B cell (primary cell): ENCODE measurements at regions of chr7 and their contacts with region 1.

Region 1: GRCh38 chr7:142811154-142811737 is 40.5 kb downstream of the PRSS2 start:
- DNase-seq: peak; percentile 84
- ATAC-seq: no peak
- H3K4me3 ChIP-seq: peak overlapping the region in 1 of 5 experiments; percentile 8
- H3K4me3 Mint-ChIP-seq: peak overlapping the region; percentile 60
- H3K27ac ChIP-seq: peak overlapping the region; percentile 1 to 99
- H3K27ac Mint-ChIP-seq: peak overlapping the region; percentile 94
- H3K4me1 ChIP-seq: peaks cover 82 to 83% of the 10 kb centered on the region in 2 donors
- H3K4me1 Mint-ChIP-seq: peaks cover 82% of the 10 kb centered on the region
- H3K27me3 ChIP-seq: no peaks in the 10 kb centered on the region
- H3K27me3 Mint-ChIP-seq: no peaks in the 10 kb centered on the region
- CTCF ChIP-seq: peak; percentile 81

Region 2: GRCh38 chr7:142568435-142569097 is 242.7 kb before region 1 on chr7:
- CTCF ChIA-PET with region 1: no interaction called
- POLR2A ChIA-PET with region 1: no interaction called
- intact Hi-C with region 1: no loop called
- DNase-seq: no peak
- ATAC-seq: no peak
- H3K4me3 ChIP-seq: no peak overlapping the region
- H3K4me3 Mint-ChIP-seq: no peak overlapping the region
- H3K27ac ChIP-seq: no peak overlapping the region
- H3K27ac Mint-ChIP-seq: no peak overlapping the region
- H3K4me1 ChIP-seq: peaks cover 0 to 4% of the 10 kb centered on the region in 2 donors
- H3K4me1 Mint-ChIP-seq: no peaks in the 10 kb centered on the region
- H3K27me3 ChIP-seq: peaks cover 0 to 10% (median 3%) of the 10 kb centered on the region in 4 experiments
- H3K27me3 Mint-ChIP-seq: peaks cover 68% of the 10 kb centered on the region
- CTCF ChIP-seq: no peak

Region 3: DNA sequence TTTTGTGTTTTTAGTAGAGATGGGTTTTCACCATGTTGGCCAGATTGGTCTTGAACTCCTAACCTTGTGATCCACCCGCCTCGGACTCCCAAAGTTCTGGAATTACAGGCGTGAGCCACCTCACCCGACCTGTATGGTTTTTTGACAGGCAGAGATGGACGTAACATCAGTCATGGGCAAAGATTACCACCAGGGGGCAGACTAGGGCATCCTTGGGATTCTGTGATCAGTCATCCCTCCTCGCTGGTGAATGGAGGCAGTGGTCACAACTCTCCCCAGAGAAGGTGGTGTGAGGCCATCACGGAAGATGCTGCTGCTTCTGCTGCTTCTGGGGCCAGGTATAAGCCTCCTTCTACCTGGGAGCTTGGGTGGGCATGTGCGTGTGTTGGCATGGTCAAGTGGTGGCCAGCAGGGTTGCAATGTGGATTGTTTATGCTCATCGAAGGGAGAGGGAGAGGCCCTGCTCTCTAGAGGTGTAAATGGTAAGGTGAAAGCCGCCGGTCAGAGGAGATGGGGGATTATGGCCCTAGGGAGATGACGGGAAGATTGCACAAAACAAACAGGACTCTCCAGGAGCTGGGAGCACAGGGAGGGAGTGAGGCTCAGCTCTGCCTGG is 184.7 kb before region 1 on chr7:
- CTCF ChIA-PET with region 1: interaction called, 197 read pairs
- POLR2A ChIA-PET with region 1: no interaction called
- intact Hi-C with region 1: no loop called
- DNase-seq: peak; percentile 71
- ATAC-seq: peak; percentile 66
- H3K4me3 ChIP-seq: no peak overlapping the region
- H3K4me3 Mint-ChIP-seq: no peak overlapping the region
- H3K27ac ChIP-seq: no peak overlapping the region
- H3K27ac Mint-ChIP-seq: no peak overlapping the region
- H3K4me1 ChIP-seq: no peaks in the 10 kb centered on the region
- H3K4me1 Mint-ChIP-seq: peaks cover 3% of the 10 kb centered on the region
- H3K27me3 ChIP-seq: peaks cover 0 to 16% (median 0%) of the 10 kb centered on the region in 4 experiments
- H3K27me3 Mint-ChIP-seq: peaks cover 36% of the 10 kb centered on the region
- CTCF ChIP-seq: peak; percentile 78

Region 4: GRCh38 chr7:142669074-142669654 is 142.1 kb before region 1 on chr7:
- CTCF ChIA-PET with region 1: interaction called, 46 read pairs
- POLR2A ChIA-PET with region 1: no interaction called
- intact Hi-C with region 1: loop called (anchors 1 kb)
- DNase-seq: peak; percentile 41
- ATAC-seq: peak; percentile 28
- H3K4me3 ChIP-seq: no peak overlapping the region
- H3K4me3 Mint-ChIP-seq: peak overlapping the region; percentile 26
- H3K27ac ChIP-seq: no peak overlapping the region
- H3K27ac Mint-ChIP-seq: no peak overlapping the region
- H3K4me1 ChIP-seq: peaks cover 22 to 37% of the 10 kb centered on the region in 2 donors
- H3K4me1 Mint-ChIP-seq: peaks cover 35% of the 10 kb centered on the region
- H3K27me3 ChIP-seq: no peaks in the 10 kb centered on the region
- H3K27me3 Mint-ChIP-seq: peaks cover under 1% of the 10 kb centered on the region
- CTCF ChIP-seq: peak; percentile 47

Region 5: GRCh38 chr7:142739923-142740492 is 71.2 kb before region 1 on chr7:
- CTCF ChIA-PET with region 1: interaction called, 46 read pairs
- POLR2A ChIA-PET with region 1: interaction called, 5 read pairs
- intact Hi-C with region 1: loop called (anchors 1 kb)
- DNase-seq: peak; percentile 82
- ATAC-seq: peak; percentile 98
- H3K4me3 ChIP-seq: peak overlapping the region in 1 of 5 experiments; percentile 16
- H3K4me3 Mint-ChIP-seq: peak overlapping the region; percentile 4
- H3K27ac ChIP-seq: no peak overlapping the region
- H3K27ac Mint-ChIP-seq: peak overlapping the region; percentile 75
- H3K4me1 ChIP-seq: peaks cover 22 to 26% of the 10 kb centered on the region in 2 donors
- H3K4me1 Mint-ChIP-seq: peaks cover 41% of the 10 kb centered on the region
- H3K27me3 ChIP-seq: no peaks in the 10 kb centered on the region
- H3K27me3 Mint-ChIP-seq: no peaks in the 10 kb centered on the region
- CTCF ChIP-seq: peak; percentile 64

Region 6: DNA sequence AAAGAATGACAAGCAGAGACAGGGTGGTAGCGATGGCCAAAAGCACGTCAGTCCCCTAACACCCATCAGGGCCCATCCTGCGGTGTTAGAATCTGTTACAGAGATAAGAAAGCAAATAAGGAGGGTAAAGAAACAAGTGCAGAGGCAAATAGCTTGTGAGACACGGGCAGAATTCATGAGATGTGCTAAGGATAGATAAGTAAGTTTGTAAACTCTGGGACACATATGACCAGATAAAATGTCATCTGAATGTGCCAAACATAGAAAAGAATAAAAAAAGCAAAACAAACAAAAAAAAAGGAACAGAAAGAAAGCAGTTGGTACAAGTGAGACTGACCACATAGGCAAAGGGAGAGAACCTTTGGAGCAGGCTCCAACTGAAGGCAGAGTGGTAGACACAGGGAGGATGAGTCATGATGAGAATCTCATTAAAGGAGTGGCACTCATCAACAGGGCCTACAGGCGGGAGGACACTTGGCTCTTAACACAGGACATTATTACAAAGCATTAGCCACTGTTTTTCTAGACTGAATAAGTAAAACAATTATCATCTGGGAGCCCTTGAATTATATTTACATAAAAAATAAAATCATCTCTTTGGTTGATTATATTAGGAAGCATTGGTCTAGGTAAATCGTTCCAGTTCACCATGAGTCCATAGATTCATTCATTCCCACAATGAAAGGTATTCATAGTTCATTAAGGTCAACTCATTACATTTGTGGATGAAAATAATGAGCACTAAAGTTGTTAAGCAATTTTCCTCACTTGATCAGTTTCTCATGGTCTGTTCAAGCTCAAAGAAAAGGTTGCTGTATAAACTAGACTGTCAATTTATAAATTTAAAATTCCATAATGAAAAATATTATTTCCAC is 22.2 kb after region 1 on chr7:
- CTCF ChIA-PET with region 1: interaction called, 38 read pairs
- POLR2A ChIA-PET with region 1: no interaction called
- intact Hi-C with region 1: loop called (anchors 2 kb)
- DNase-seq: no peak
- ATAC-seq: no peak
- H3K4me3 ChIP-seq: no peak overlapping the region
- H3K4me3 Mint-ChIP-seq: no peak overlapping the region
- H3K27ac ChIP-seq: no peak overlapping the region
- H3K27ac Mint-ChIP-seq: no peak overlapping the region
- H3K4me1 ChIP-seq: peaks cover 0 to 11% of the 10 kb centered on the region in 2 donors
- H3K4me1 Mint-ChIP-seq: peaks cover 28% of the 10 kb centered on the region
- H3K27me3 ChIP-seq: no peaks in the 10 kb centered on the region
- H3K27me3 Mint-ChIP-seq: no peaks in the 10 kb centered on the region
- CTCF ChIP-seq: no peak

Region 7: GRCh38 chr7:142866361-142867058 is 55.3 kb after region 1 on chr7:
- CTCF ChIA-PET with region 1: interaction called, 33 read pairs
- POLR2A ChIA-PET with region 1: no interaction called
- intact Hi-C with region 1: no loop called
- DNase-seq: peak; percentile 29
- ATAC-seq: no peak
- H3K4me3 ChIP-seq: no peak overlapping the region
- H3K4me3 Mint-ChIP-seq: no peak overlapping the region
- H3K27ac ChIP-seq: no peak overlapping the region
- H3K27ac Mint-ChIP-seq: no peak overlapping the region
- H3K4me1 ChIP-seq: no peaks in the 10 kb centered on the region
- H3K4me1 Mint-ChIP-seq: peaks cover 3% of the 10 kb centered on the region
- H3K27me3 ChIP-seq: no peaks in the 10 kb centered on the region
- H3K27me3 Mint-ChIP-seq: no peaks in the 10 kb centered on the region
- CTCF ChIP-seq: peak; percentile 24

Region 8: DNA sequence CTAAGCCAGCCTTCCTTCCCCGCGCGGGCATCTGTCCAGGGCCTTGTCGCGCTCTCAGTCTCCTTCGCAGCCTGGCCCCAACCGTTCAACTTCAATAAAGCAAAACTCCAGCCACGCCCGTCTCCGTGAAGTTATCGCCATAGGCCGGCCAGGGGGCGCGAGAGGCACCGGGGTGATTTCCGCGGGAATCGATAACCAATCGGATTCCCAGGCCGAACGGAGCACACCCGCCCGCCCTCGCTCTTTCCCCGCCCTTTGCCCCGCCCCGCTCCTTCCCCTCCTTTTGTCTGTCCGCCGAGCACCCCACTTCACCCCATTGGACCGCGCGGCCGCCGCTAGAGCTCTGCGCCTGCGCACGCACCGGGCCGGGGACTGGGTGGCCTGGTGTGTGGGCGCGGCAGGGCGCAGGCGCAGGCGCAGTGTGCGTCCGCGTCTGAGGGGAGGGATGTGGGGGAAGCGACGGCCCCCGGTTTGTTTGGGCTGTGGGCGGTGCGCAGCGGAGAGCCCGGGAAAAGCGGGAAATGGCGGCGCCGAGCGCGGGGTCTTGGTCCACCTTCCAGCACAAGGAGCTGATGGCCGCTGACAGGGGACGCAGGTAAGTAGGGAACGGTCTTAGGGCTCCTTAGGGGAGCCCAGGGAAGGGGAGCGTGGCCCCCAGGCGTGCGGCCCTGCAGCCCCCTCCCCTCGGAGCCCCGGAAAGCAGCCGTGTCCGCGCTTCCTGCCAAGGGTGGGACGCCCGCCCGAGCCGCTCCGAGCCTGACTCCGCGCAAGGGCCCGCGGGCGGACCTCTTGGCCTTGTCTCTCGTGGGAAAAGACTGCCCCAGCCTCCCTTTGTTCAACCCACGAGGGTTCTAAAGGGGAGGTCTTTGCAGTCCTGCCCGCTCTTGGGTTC is 476.9 kb after region 1 on chr7 and contains the start of gene CASP2:
- CTCF ChIA-PET with region 1: no interaction called
- POLR2A ChIA-PET with region 1: no interaction called
- intact Hi-C with region 1: loop called (anchors 5 kb)
- DNase-seq: peak; percentile 99
- ATAC-seq: peak; percentile 90
- H3K4me3 ChIP-seq: peak within 1 kb of the TSS; percentile 73 to 95 (median 91)
- H3K4me3 Mint-ChIP-seq: peak within 1 kb of the TSS; percentile 95
- H3K27ac ChIP-seq: peak within 1 kb of the TSS; percentile 82 to 86
- H3K27ac Mint-ChIP-seq: peak within 1 kb of the TSS; percentile 84
- H3K4me1 ChIP-seq: peaks cover 42 to 43% of the 10 kb centered on the region in 2 donors
- H3K4me1 Mint-ChIP-seq: peaks cover 59% of the 10 kb centered on the region
- H3K27me3 ChIP-seq: no peaks in the 10 kb centered on the region
- H3K27me3 Mint-ChIP-seq: no peaks in the 10 kb centered on the region
- CTCF ChIP-seq: peak; percentile 36
- total RNA-seq, gene CASP2: 66.5 and 71.1 TPM in 2 replicates